Esophagus muscularis mucosa (tissue), 4 donors: ENCODE measurements at regions of chr7 and their contacts with region 1.

Region 1: DNA sequence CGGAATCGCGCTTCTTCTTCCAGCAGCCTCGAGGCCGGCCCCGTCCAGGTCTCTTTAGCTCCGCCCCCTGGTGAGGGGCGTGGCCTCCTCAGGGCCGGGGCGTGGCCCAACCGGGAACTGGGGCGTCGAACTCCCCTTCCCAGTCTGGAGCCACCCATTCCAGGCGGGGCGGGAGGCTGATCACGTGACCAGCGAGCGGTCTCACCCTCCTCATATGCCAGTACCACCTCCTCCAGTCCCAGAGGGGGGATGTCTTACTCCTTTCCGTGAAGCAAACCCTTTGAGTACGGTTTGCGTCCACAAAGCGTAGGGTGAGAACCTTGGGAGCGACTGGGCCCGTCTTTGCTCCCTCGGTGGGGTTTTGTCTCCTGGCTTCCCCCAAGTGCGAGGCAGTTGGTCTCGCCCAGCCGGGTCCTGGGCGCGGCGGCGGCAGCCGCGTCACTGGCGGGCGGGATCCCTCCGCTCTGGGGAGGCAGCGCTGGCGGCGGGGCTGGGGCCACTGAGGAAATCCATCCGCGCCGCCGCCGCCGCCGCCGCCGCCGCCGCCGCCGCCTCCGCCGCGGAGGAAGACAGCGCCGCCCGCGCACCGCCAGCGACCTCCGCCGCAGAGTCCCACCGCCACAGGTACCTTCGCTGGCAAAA is at the start of gene GNB2:
- DNase-seq: peak; percentile 100
- H3K4me3 ChIP-seq: peak within 1 kb of the TSS; percentile 88 to 96 (median 96)
- H3K27ac ChIP-seq: peak within 1 kb of the TSS; percentile 98 to 100 (median 98)
- H3K4me1 ChIP-seq: peaks cover 17 to 39% (median 35%) of the 10 kb centered on the region in 4 donors
- H3K27me3 ChIP-seq: no peaks in the 10 kb centered on the region
- CTCF ChIP-seq: peak in 1 of 3 experiments; percentile 10
- EP300 ChIP-seq: peak; percentile 10
- POLR2A ChIP-seq: peak; percentile 56
- total RNA-seq, gene GNB2: 150 to 229 (median 218) TPM

Region 2: GRCh38 chr7:100611974-100612729 is 61.3 kb before region 1 on chr7 and contains the start of gene MOSPD3:
- intact Hi-C with region 1: loop called (anchors 5 kb)
- DNase-seq: peak; percentile 100
- H3K4me3 ChIP-seq: peak within 1 kb of the TSS; percentile 65 to 83 (median 74)
- H3K27ac ChIP-seq: peak within 1 kb of the TSS; percentile 91 to 95 (median 92)
- H3K4me1 ChIP-seq: peaks cover 14 to 17% (median 14%) of the 10 kb centered on the region in 4 donors
- H3K27me3 ChIP-seq: no peaks in the 10 kb centered on the region
- CTCF ChIP-seq: peak in 1 of 3 experiments; percentile 13
- EP300 ChIP-seq: no peak
- POLR2A ChIP-seq: peak; percentile 87
- total RNA-seq, gene MOSPD3: 6.6 to 16.8 (median 12.0) TPM

Region 3: GRCh38 chr7:100626530-100627237 is 46.7 kb before region 1 on chr7:
- intact Hi-C with region 1: no loop called
- DNase-seq: peak; percentile 96
- H3K4me3 ChIP-seq: peak overlapping the region; percentile 39 to 57 (median 43)
- H3K27ac ChIP-seq: peak overlapping the region in 2 of 4 donors; percentile 21 to 40
- H3K4me1 ChIP-seq: peaks cover 8 to 14% (median 12%) of the 10 kb centered on the region in 4 donors
- H3K27me3 ChIP-seq: peaks cover 0 to 21% (median under 1%) of the 10 kb centered on the region in 4 donors
- CTCF ChIP-seq: no peak
- EP300 ChIP-seq: no peak
- POLR2A ChIP-seq: no peak